ENCODE measurements at regions of chr9 and their contacts with region 1.

Region 1: DNA sequence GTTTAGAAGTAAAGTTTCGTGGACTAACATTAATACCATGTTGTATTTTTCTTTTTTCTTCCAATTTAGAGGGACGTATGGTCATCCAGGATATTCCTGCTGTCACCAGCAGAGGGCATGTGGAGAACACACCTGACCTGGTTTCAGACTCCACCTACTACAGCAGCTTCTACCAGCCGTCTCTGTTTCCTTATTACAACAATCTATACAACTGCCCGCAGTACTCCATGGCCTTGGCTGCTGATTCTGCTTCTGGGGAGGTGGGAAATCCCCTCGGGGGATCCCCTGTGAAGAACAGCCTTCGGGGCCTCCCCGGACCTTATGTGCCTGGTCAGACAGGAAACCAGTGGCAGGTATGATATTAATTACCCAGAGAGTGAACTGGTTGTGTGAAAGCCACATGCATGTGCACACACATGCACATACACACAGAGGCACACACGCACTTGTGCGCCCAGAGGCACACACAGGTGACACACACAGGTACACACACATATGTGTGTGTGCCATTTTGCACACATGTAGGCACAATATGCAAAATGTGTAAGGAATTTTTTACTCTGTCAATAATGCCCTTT is 52.4 kb downstream of the DMRT1 start:
- DNase-seq: peak; percentile 77
- H3K4me3 Mint-ChIP-seq: no peak overlapping the region
- H3K27ac Mint-ChIP-seq: no peak overlapping the region
- H3K4me1 Mint-ChIP-seq: peaks cover 16% of the 10 kb centered on the region
- H3K27me3 Mint-ChIP-seq: no peaks in the 10 kb centered on the region
- CTCF ChIP-seq: peak; percentile 83

Region 2: DNA sequence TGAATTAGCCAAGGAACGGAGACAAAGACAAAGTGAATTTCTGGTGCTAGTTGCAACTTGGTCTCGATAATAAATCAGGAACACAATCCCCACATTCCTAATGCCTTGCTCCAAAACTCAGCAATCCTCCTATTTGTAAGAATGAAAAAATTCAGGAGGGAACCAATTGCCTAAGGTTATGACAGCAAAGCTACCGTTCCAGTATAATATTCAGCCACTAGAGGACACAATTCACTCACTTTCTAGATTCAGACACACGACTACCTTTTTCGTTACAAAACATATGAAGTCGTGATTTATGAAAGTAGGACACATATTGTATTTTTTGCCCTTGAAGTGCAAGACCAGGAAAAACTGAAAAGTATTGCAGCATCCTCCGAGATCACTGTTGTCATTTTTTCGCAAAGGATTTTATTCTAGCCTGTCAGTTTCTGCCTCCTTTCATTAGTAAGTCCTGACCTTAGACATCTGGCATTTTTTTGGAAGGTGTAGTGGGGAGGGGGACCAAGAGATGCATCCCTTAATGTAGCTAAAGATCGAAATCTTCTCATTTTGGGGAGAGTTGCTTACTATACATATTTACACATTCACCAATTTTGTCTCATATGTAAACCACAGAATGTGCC is 546.2 kb before region 1 on chr9:
- CTCF ChIA-PET with region 1: interaction called, 4 read pairs
- POLR2A ChIA-PET with region 1: no interaction called
- intact Hi-C with region 1: loop called (anchors 5 kb)
- DNase-seq: peak; percentile 57
- H3K4me3 Mint-ChIP-seq: no peak overlapping the region
- H3K27ac Mint-ChIP-seq: no peak overlapping the region
- H3K4me1 Mint-ChIP-seq: no peaks in the 10 kb centered on the region
- H3K27me3 Mint-ChIP-seq: peaks cover 13% of the 10 kb centered on the region
- CTCF ChIP-seq: peak; percentile 78

Region 3: GRCh38 chr9:385818-386398 is 508.0 kb before region 1 on chr9:
- CTCF ChIA-PET with region 1: interaction called, 3 read pairs
- POLR2A ChIA-PET with region 1: no interaction called
- intact Hi-C with region 1: loop called (anchors 5 kb)
- DNase-seq: peak; percentile 80
- H3K4me3 Mint-ChIP-seq: no peak overlapping the region
- H3K27ac Mint-ChIP-seq: no peak overlapping the region
- H3K4me1 Mint-ChIP-seq: peaks cover 6% of the 10 kb centered on the region
- H3K27me3 Mint-ChIP-seq: no peaks in the 10 kb centered on the region
- CTCF ChIP-seq: peak; percentile 91

Region 4: DNA sequence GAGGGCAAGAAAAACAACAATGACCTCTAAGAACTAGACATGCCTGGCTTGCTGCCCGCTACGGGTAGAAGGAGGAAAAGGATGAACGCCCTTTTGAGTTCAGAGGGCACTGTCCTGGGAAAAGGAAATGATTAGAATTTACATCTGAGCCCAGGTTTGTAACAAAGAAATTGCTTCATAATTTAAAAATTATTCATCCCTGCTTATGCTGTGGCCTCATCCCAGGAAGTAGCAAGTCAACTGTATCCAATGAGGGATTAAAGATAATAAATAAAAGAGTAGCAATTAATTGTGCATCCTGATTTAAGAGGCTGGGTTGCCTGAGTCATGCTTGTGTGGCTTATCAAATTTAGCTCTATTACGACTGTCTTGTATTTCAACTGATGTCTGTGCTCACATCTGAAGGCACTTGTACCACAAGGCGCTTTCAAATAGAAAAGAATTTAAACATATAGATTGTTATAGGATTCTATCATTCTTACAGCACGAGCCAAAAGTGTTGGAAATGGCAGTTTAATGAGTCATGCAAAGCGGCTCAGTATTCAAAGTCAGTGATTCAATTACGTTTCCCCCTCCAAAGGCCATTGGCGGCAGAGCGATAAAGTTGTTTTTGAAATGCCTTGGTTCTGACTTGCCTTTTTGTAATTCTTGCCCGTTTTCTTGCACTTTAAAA is 92.4 kb before region 1 on chr9:
- CTCF ChIA-PET with region 1: no interaction called
- POLR2A ChIA-PET with region 1: no interaction called
- intact Hi-C with region 1: no loop called
- DNase-seq: peak; percentile 46
- H3K4me3 Mint-ChIP-seq: no peak overlapping the region
- H3K27ac Mint-ChIP-seq: no peak overlapping the region
- H3K4me1 Mint-ChIP-seq: peaks cover 12% of the 10 kb centered on the region
- H3K27me3 Mint-ChIP-seq: no peaks in the 10 kb centered on the region
- CTCF ChIP-seq: no peak

Region 5: DNA sequence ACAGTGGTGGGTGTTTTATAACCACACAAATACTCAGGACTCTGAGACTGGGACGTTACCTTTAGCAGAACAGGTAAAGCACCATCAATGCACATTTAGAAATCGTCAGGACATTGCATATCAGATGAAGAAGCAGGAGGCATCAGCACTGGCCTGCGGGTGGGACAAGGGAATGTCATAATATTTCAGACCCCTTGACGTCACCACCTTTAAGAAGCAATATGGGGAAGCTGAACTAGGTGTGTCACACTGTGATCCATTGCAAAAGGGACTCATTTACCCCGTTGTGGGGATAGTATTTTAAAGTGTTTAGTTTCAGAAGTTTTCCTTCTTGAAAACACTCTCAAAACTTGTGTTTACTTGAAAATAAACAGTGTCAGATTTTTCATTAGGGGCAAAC is 27.7 kb before region 1 on chr9:
- CTCF ChIA-PET with region 1: interaction called, 10 read pairs
- POLR2A ChIA-PET with region 1: no interaction called
- intact Hi-C with region 1: no loop called
- DNase-seq: no peak
- H3K4me3 Mint-ChIP-seq: no peak overlapping the region
- H3K27ac Mint-ChIP-seq: no peak overlapping the region
- H3K4me1 Mint-ChIP-seq: no peaks in the 10 kb centered on the region
- H3K27me3 Mint-ChIP-seq: no peaks in the 10 kb centered on the region
- CTCF ChIP-seq: no peak

Region 6: DNA sequence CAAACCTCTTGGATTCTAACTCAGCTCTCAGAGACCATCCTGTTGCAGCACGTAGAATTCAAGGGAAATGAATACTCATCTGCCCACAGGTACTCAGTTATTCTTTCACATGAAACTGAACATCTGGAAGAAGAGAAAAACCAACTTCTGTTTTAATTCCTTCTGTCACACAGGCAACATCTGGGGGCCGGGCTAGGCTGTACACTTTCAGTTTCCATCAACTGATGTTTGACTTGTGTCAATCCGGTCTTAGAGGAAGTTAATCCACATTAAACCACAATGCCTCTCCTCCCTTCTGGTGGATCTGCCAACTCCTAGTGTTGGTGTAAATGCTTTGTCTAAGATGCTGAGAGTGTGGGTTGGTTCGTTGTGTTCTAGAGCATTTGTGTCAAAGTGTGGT is 100.1 kb after region 1 on chr9:
- CTCF ChIA-PET with region 1: interaction called, 183 read pairs
- POLR2A ChIA-PET with region 1: interaction called, 3 read pairs
- intact Hi-C with region 1: no loop called
- DNase-seq: no peak
- H3K4me3 Mint-ChIP-seq: no peak overlapping the region
- H3K27ac Mint-ChIP-seq: no peak overlapping the region
- H3K4me1 Mint-ChIP-seq: no peaks in the 10 kb centered on the region
- H3K27me3 Mint-ChIP-seq: peaks cover 8% of the 10 kb centered on the region
- CTCF ChIP-seq: no peak

Region 7: DNA sequence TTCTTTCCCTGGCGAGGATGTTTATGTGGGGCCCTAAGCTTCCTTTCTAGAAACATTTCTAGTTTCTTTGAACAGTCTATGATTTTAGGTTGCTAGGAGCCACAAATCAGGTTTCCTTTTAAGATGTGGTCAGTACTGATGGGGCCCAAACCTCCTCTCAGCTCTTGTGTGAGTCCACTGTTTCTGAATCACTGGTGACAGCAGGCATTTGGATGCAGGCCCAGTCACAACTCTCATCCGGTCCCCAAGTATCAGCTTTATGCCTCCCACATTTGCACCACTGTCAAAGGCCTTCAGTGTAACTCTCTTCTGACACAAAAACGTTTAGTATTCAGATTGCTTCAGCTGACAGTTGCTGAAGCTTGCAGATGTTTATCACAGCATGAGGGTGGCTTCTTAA is 164.0 kb after region 1 on chr9:
- CTCF ChIA-PET with region 1: no interaction called
- POLR2A ChIA-PET with region 1: no interaction called
- intact Hi-C with region 1: no loop called
- DNase-seq: no peak
- H3K4me3 Mint-ChIP-seq: no peak overlapping the region
- H3K27ac Mint-ChIP-seq: no peak overlapping the region
- H3K4me1 Mint-ChIP-seq: no peaks in the 10 kb centered on the region
- H3K27me3 Mint-ChIP-seq: no peaks in the 10 kb centered on the region
- CTCF ChIP-seq: no peak

Region 8: GRCh38 chr9:1115370-1115769 is 221.4 kb after region 1 on chr9:
- CTCF ChIA-PET with region 1: no interaction called
- POLR2A ChIA-PET with region 1: no interaction called
- intact Hi-C with region 1: no loop called
- DNase-seq: no peak
- H3K4me3 Mint-ChIP-seq: no peak overlapping the region
- H3K27ac Mint-ChIP-seq: no peak overlapping the region
- H3K4me1 Mint-ChIP-seq: peaks cover under 1% of the 10 kb centered on the region
- H3K27me3 Mint-ChIP-seq: no peaks in the 10 kb centered on the region
- CTCF ChIP-seq: no peak

Region 9: GRCh38 chr9:1604942-1605560 is 711.1 kb after region 1 on chr9:
- CTCF ChIA-PET with region 1: interaction called, 3 read pairs
- POLR2A ChIA-PET with region 1: no interaction called
- intact Hi-C with region 1: loop called (anchors 1 kb)
- DNase-seq: peak; percentile 56
- H3K4me3 Mint-ChIP-seq: no peak overlapping the region
- H3K27ac Mint-ChIP-seq: no peak overlapping the region
- H3K4me1 Mint-ChIP-seq: no peaks in the 10 kb centered on the region
- H3K27me3 Mint-ChIP-seq: peaks cover 12% of the 10 kb centered on the region
- CTCF ChIP-seq: peak; percentile 76

Region 10: GRCh38 chr9:1619915-1620710 is 726.2 kb after region 1 on chr9:
- CTCF ChIA-PET with region 1: interaction called, 5 read pairs
- POLR2A ChIA-PET with region 1: no interaction called
- intact Hi-C with region 1: loop called (anchors 1 kb)
- DNase-seq: peak; percentile 32
- H3K4me3 Mint-ChIP-seq: peak overlapping the region; percentile 24
- H3K27ac Mint-ChIP-seq: peak overlapping the region; percentile 60
- H3K4me1 Mint-ChIP-seq: peaks cover 5% of the 10 kb centered on the region
- H3K27me3 Mint-ChIP-seq: peaks cover 50% of the 10 kb centered on the region
- CTCF ChIP-seq: peak; percentile 33